Activated CD8-positive, alpha-beta T cell treated with anti-CD3 and anti-CD28 coated beads, Interleukin-2, amount 10 ng/mL, durations not matched to agents 7 days and 5 days (primary cell): ENCODE measurements at regions of chr22 and their contacts with region 1.

Region 1: GRCh38 chr22:40436505-40437451 is 66.4 kb downstream of the SGSM3 start:
- DNase-seq: peak; percentile 41
- ATAC-seq: peak; percentile 66
- H3K4me3 Mint-ChIP-seq: peak overlapping the region; percentile 27
- H3K27ac Mint-ChIP-seq: peak overlapping the region; percentile 81
- H3K4me1 Mint-ChIP-seq: peaks cover 54% of the 10 kb centered on the region
- H3K27me3 Mint-ChIP-seq: no peaks in the 10 kb centered on the region

Region 2: GRCh38 chr22:40426594-40427333 is 10.0 kb before region 1 on chr22:
- CTCF ChIA-PET with region 1: interaction called, 37 read pairs
- POLR2A ChIA-PET with region 1: no interaction called
- DNase-seq: no peak
- ATAC-seq: no peak
- H3K4me3 Mint-ChIP-seq: no peak overlapping the region
- H3K27ac Mint-ChIP-seq: peak overlapping the region; percentile 48
- H3K4me1 Mint-ChIP-seq: peaks cover 7% of the 10 kb centered on the region
- H3K27me3 Mint-ChIP-seq: no peaks in the 10 kb centered on the region

Region 3: GRCh38 chr22:40473703-40474102 is 36.9 kb after region 1 on chr22:
- CTCF ChIA-PET with region 1: interaction called, 48 read pairs
- POLR2A ChIA-PET with region 1: no interaction called
- DNase-seq: no peak
- ATAC-seq: no peak
- H3K4me3 Mint-ChIP-seq: no peak overlapping the region
- H3K27ac Mint-ChIP-seq: no peak overlapping the region
- H3K4me1 Mint-ChIP-seq: peaks cover 40% of the 10 kb centered on the region
- H3K27me3 Mint-ChIP-seq: no peaks in the 10 kb centered on the region

Region 4: GRCh38 chr22:40504285-40505249 is 67.8 kb after region 1 on chr22:
- CTCF ChIA-PET with region 1: interaction called, 14 read pairs
- POLR2A ChIA-PET with region 1: no interaction called
- DNase-seq: no peak
- ATAC-seq: no peak
- H3K4me3 Mint-ChIP-seq: no peak overlapping the region
- H3K27ac Mint-ChIP-seq: no peak overlapping the region
- H3K4me1 Mint-ChIP-seq: peaks cover 6% of the 10 kb centered on the region
- H3K27me3 Mint-ChIP-seq: no peaks in the 10 kb centered on the region

Region 5: DNA sequence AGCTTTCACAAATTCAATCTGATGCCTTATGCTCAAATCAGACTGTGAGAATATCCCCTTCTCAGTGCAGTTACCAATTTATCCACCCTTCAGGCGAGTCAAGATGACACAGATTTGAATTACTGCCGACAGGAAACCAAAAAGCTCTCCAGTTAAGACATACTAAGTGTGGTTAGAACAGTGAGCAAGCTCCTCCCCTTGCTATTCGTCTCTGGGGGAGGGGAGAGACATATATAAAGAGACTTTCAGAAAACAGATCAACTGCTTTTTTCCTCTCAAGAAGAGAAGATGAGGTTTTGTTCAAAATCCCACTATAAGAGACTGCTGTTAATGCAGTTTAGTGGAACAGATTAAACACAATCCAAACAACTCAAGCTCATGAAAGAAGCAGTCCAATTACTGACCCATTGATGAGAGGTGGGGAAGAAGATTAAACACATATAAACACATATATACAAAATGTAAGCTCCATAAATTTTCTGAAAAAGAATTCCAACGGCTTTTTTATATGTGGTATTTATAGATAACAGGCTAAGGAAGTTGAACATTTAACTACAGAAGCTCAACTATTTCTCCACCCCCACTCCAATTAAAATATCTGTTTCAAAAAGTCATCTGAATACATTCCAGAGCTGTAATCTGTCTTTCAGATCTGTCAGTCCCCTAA is 97.1 kb after region 1 on chr22:
- CTCF ChIA-PET with region 1: interaction called, 30 read pairs
- POLR2A ChIA-PET with region 1: no interaction called
- DNase-seq: peak; percentile 79
- ATAC-seq: peak; percentile 93
- H3K4me3 Mint-ChIP-seq: peak overlapping the region; percentile 89
- H3K27ac Mint-ChIP-seq: peak overlapping the region; percentile 92
- H3K4me1 Mint-ChIP-seq: peaks cover 55% of the 10 kb centered on the region
- H3K27me3 Mint-ChIP-seq: no peaks in the 10 kb centered on the region

Region 6: DNA sequence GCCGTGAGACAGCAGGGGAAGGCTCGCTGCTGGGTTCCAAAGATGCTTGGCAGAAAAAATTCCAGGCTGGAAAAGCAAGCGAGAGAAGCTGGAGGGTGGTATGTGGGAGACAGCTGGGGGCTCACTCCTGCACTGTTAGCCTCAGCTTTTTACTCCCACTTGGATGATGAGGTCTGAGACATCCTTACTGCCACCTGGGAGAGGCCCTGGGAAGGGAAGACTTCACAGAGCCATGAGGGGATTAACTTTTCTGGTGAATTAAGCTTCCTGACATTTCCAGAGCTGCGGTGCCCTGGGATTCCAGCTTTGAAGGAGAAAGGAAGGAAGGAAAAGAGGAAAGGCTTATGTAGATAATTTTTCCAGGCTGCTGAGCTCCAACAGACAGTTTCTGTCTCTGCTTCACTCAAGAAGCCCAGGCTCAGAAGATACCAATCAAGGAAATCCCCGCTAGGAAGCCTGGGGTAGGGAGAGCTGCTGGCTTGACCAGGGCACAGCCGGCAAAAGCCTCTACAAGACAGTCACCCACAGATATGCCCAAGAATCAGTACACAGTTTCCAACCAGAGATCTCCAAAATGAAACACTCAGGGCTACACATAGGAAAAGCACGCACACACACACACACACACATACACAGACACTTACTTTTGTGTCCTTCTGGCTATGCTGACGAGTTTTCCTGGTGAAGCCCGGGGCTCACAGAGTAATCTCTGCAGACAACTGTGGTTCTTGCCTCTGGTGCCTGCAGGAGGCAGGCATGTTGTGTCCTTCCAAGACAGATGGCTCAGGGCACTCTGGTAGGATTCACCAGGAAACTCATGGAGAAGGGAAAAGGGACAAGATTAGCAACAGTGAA is 243.4 kb after region 1 on chr22:
- CTCF ChIA-PET with region 1: interaction called, 16 read pairs
- POLR2A ChIA-PET with region 1: no interaction called
- DNase-seq: no peak
- ATAC-seq: no peak
- H3K4me3 Mint-ChIP-seq: no peak overlapping the region
- H3K27ac Mint-ChIP-seq: no peak overlapping the region
- H3K4me1 Mint-ChIP-seq: peaks cover 29% of the 10 kb centered on the region
- H3K27me3 Mint-ChIP-seq: peaks cover 21% of the 10 kb centered on the region